CD8-positive, alpha-beta T cell (primary cell): ENCODE measurements at regions of chrX and their contacts with region 1.

Region 1: DNA sequence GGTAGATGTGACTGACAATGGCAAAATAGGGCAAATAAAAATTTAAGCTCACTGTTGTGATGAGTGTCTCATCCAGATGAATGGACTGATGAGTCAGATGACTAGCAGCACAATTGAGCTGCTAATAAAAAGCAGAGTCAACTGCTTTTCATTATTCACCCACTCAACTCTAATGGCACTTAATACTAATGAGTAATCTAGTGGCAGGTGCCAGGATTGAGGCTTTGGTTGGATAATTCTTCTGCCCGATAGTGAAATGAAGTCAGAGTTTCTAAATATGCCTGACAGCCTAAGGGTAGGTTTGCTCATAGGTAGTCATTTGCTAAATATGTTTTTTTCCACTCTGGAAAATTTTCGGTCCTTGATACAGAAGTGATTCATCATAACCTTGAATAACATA is 10.4 kb downstream of the OGT start:
- DNase-seq: no peak
- ATAC-seq: peak; percentile 25
- H3K4me3 ChIP-seq: no peak overlapping the region
- H3K4me3 Mint-ChIP-seq: peak overlapping the region; percentile 65
- H3K27ac ChIP-seq: peak overlapping the region in 1 of 2 experiments; percentile 50
- H3K27ac Mint-ChIP-seq: peak overlapping the region; percentile 78
- H3K4me1 ChIP-seq: peaks cover 66% of the 10 kb centered on the region
- H3K4me1 Mint-ChIP-seq: peaks cover 67% of the 10 kb centered on the region
- H3K27me3 ChIP-seq: no peaks in the 10 kb centered on the region
- H3K27me3 Mint-ChIP-seq: no peaks in the 10 kb centered on the region
- CTCF ChIP-seq: no peak

Region 2: DNA sequence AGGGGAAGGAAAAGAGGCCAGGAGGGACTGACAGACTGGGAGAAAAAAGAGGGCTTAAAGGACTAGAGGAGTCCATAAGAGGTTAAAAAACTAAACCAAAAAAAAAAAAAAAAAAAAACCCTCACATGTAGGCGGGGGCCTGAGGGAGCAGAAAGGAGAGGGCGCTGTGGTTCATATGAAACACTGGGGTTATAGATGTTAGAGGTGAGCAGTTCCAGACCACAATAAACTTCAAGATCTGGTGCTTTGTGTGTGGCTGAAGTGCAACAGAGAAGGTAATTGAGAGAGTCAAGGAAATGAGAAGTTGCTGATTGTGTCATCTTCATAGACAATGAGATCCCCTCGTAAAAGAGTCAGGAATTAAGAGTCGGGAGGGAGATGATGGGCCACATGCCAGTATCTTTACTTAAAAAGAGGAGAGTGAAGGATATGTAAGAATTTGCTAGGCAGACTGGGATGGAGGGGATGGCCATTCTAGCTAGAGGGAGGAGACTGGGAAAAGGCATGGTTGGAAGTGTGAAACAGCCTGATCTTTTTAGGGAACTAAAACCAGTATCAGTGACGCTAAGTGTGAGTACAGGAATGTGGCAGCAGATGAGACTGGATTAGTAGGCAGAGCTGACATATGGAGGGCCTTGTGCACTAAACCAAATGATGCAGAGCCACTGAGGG is 28.8 kb before region 1 on chrX:
- CTCF ChIA-PET with region 1: interaction called, 3 read pairs
- POLR2A ChIA-PET with region 1: interaction called, 5 read pairs
- intact Hi-C with region 1: loop called in 1 of 2 experiments (anchors 5 kb)
- DNase-seq: peak in 5 of 9 experiments; percentile 35 to 80 (median 69)
- ATAC-seq: peak; percentile 99
- H3K4me3 ChIP-seq: no peak overlapping the region
- H3K4me3 Mint-ChIP-seq: no peak overlapping the region
- H3K27ac ChIP-seq: no peak overlapping the region
- H3K27ac Mint-ChIP-seq: peak overlapping the region; percentile 80
- H3K4me1 ChIP-seq: peaks cover 13% of the 10 kb centered on the region
- H3K4me1 Mint-ChIP-seq: peaks cover 17% of the 10 kb centered on the region
- H3K27me3 ChIP-seq: no peaks in the 10 kb centered on the region
- H3K27me3 Mint-ChIP-seq: no peaks in the 10 kb centered on the region
- CTCF ChIP-seq: no peak

Region 3: DNA sequence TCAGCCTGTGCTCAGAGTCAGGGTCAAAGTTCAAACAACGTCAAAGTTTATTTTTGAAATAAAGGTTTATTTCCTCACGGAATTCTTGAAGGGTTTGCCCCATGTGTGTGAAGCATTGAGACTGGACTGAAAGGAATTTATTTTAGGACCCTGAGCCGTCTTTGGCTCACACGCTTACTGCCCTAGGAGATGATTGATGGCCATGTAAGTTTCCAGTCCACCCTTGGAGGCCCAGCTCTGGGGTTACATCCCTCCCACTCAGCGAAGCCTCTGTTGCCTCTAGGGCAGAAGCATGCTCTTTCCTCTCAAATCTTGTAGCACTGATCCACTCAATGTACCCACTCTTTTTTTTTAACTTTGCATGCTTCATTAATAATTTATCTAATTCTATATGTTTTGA is 362.8 kb after region 1 on chrX:
- CTCF ChIA-PET with region 1: no interaction called
- POLR2A ChIA-PET with region 1: no interaction called
- intact Hi-C with region 1: no loop called
- DNase-seq: no peak
- ATAC-seq: no peak
- H3K4me3 ChIP-seq: no peak overlapping the region
- H3K4me3 Mint-ChIP-seq: no peak overlapping the region
- H3K27ac ChIP-seq: no peak overlapping the region
- H3K27ac Mint-ChIP-seq: no peak overlapping the region
- H3K4me1 ChIP-seq: no peaks in the 10 kb centered on the region
- H3K4me1 Mint-ChIP-seq: peaks cover 2% of the 10 kb centered on the region
- H3K27me3 ChIP-seq: peaks cover 5 to 10% of the 10 kb centered on the region in 2 experiments
- H3K27me3 Mint-ChIP-seq: peaks cover 30% of the 10 kb centered on the region
- CTCF ChIP-seq: no peak